Endothelial cell of umbilical vein (primary cell): ENCODE measurements at regions of chr16 and their contacts with region 1.

Region 1: DNA sequence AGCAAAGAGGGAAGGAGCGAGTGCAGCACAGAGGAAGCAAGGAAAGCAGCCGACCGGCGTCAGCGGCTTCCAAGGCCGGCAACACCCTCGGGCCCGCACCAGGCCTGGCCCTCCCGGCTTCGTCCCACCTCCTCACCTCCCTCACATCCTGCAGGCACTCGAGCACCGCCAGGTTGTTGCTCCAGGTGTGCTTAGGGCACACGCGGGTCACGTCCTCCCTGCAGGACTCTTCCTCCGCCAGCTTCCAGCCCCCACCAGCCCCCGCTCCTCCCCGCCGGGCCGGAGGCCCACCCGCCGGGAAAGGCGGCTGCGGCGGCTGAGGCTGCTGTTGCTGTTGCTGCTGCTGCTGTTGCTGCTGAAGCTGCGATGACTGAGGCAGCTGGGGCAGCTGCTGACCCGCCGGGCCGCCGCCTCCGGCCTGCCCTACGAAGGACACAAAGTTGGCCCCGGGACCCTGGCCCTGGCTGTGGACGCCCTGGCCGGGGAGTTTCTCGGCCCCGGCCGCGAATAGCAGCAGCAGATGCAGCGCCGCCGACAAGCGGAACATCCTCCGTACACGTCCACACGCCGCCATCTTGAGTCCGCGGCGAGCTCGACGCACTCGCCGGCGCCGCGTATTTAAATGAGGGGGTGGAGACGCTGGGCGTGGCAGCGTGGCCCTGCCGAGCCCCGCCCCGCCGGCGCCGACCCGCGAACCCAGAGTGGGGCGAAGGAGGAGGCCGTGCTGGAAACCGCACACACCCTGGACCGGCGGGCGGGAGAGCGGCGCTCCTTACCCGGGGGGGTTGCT is at the start of gene GLG1:
- DNase-seq: peak; percentile 94
- H3K4me3 ChIP-seq: peak within 1 kb of the TSS; percentile 79 to 86 (median 85)
- H3K27ac ChIP-seq: peak within 1 kb of the TSS; percentile 66
- H3K4me1 ChIP-seq: peaks cover 26% of the 10 kb centered on the region
- H3K27me3 ChIP-seq: no peaks in the 10 kb centered on the region
- CTCF ChIP-seq: no peak
- POLR2A ChIP-seq: peak; percentile 91
- total RNA-seq, gene GLG1: 150 and 165 TPM in 2 replicates

Region 2: DNA sequence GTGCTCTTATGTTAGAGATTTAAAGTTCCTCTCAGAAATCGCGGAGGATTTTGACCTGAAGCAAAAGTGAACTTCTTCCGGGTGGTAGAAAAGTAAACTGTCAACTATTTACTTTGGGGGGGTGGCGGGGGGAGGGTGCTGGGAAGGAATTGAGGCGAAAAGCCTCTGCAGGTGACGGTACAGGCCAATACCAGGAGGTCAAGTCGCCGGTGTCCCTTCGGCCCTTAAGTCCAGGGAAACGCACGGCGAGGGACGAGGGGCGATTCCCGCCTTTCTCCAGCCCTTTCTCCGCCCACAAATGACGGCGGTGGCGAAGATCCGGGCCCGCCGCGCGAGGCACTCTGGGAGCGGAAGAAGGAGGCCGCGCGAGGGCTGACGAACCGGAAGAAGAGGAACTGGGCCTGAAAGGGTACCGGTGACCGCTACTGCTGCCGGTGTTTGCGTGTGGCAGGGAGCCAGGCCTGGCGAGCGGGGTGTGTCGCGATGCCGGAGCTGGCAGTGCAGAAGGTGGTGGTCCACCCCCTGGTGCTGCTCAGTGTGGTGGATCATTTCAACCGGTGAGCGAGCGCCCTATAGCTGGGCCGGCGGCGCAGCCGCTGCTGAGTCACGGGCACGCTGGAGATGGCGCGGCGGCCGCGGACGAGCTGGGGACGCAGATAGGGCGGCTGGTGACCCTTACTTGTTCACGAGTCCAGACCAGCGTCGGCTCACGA is 310.1 kb before region 1 on chr16 and contains the start of gene PSMD7:
- CTCF ChIA-PET with region 1: no interaction called
- POLR2A ChIA-PET with region 1: no interaction called
- dilution Hi-C with region 1: no loop called
- intact Hi-C with region 1: loop called (anchors 5 kb)
- DNase-seq: peak; percentile 93
- H3K4me3 ChIP-seq: peak within 1 kb of the TSS; percentile 84 to 97 (median 95)
- H3K27ac ChIP-seq: peak within 1 kb of the TSS; percentile 81
- H3K4me1 ChIP-seq: peaks cover 16% of the 10 kb centered on the region
- H3K27me3 ChIP-seq: no peaks in the 10 kb centered on the region
- CTCF ChIP-seq: no peak
- POLR2A ChIP-seq: peak; percentile 87
- total RNA-seq, gene PSMD7: 119 and 123 TPM in 2 replicates

Region 3: GRCh38 chr16:74451951-74452758 is 154.6 kb before region 1 on chr16:
- CTCF ChIA-PET with region 1: no interaction called
- POLR2A ChIA-PET with region 1: no interaction called
- dilution Hi-C with region 1: no loop called
- intact Hi-C with region 1: loop called (anchors 2 kb)
- DNase-seq: peak; percentile 26
- H3K4me3 ChIP-seq: no peak overlapping the region
- H3K27ac ChIP-seq: peak overlapping the region; percentile 54
- H3K4me1 ChIP-seq: peaks cover 47% of the 10 kb centered on the region
- H3K27me3 ChIP-seq: no peaks in the 10 kb centered on the region
- CTCF ChIP-seq: no peak
- POLR2A ChIP-seq: no peak

Region 4: GRCh38 chr16:74501484-74502479 is 104.9 kb before region 1 on chr16:
- CTCF ChIA-PET with region 1: no interaction called
- POLR2A ChIA-PET with region 1: no interaction called
- dilution Hi-C with region 1: no loop called
- intact Hi-C with region 1: loop called (anchors 5 kb)
- DNase-seq: no peak
- H3K4me3 ChIP-seq: no peak overlapping the region
- H3K27ac ChIP-seq: no peak overlapping the region
- H3K4me1 ChIP-seq: no peaks in the 10 kb centered on the region
- H3K27me3 ChIP-seq: no peaks in the 10 kb centered on the region
- CTCF ChIP-seq: no peak
- POLR2A ChIP-seq: no peak

Region 5: GRCh38 chr16:75053791-75054555 is 447.3 kb after region 1 on chr16:
- CTCF ChIA-PET with region 1: no interaction called
- POLR2A ChIA-PET with region 1: interaction called, 14 read pairs
- dilution Hi-C with region 1: no loop called
- intact Hi-C with region 1: no loop called
- DNase-seq: peak; percentile 21
- H3K4me3 ChIP-seq: no peak overlapping the region
- H3K27ac ChIP-seq: no peak overlapping the region
- H3K4me1 ChIP-seq: peaks cover 7% of the 10 kb centered on the region
- H3K27me3 ChIP-seq: no peaks in the 10 kb centered on the region
- CTCF ChIP-seq: no peak
- POLR2A ChIP-seq: no peak